ENCODE measurements at regions of chr2 and their contacts with region 1.

Region 1: DNA sequence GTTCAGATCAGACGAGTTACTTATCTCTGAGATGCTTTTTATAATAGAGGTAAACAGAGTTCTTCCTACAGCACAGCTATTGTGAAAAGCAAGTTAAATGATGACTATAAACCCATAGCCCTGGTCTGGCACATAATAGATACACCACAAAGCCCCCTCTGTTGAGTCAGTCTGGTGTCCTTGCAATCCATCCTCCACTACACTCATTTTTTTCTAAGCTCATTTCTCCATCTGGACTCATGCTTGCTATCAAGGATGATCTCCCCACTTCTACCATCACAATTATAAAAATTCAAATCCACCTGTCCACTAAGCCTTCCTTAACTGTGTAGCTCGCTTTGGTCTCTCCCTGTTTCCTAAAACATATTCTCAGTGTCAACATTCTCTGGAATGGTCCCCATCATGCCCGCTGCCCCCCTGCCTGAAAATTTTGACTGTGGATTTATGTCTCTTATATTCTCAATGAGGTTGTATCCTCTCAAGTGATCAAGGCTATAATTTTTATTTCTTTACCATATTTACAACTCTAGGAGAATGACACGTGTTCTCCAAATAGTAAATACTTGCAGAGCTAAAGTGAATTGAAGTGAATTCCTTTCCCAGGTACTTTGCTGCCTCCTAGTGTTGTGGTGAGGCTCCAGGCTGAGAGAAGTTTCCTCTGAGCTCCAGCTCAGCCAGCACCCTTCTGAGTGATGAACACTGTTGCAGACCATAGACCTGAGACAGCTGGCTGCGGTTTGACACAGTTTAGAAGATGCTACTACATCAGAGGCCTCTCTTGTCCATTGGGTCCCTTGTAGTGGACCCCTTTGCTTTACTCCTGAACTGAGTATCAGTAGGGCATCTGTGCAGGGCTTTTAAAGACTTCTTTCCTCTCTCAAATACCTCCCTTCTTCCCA is 108.7 kb downstream of the DPP10 start:
- DNase-seq: peak; percentile 62
- H3K4me3 Mint-ChIP-seq: no peak overlapping the region
- H3K27ac Mint-ChIP-seq: no peak overlapping the region
- H3K4me1 Mint-ChIP-seq: no peaks in the 10 kb centered on the region
- H3K27me3 Mint-ChIP-seq: peaks cover 39% of the 10 kb centered on the region
- CTCF ChIP-seq: peak; percentile 78

Region 2: DNA sequence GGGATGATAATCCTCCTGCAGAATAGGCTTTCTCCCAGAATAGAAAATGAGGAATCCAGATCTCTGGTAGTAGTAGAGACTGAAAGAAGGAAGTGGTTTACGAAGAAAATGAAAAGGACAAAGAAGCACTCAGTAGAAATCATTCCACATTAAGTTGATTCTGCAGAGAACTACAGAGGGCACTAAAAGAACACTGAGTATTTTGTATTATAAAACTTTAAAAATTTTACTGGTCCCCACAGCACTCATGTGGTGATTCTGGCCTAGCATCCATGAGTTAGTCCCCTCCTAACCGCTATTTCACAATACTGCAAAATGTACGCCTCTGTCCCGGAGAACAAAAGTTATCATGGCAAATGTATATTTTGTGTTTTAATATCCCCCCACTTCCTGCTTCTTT is 751.8 kb before region 1 on chr2:
- CTCF ChIA-PET with region 1: interaction called, 3 read pairs
- POLR2A ChIA-PET with region 1: no interaction called
- intact Hi-C with region 1: loop called (anchors 5 kb)
- DNase-seq: no peak
- H3K4me3 Mint-ChIP-seq: no peak overlapping the region
- H3K27ac Mint-ChIP-seq: no peak overlapping the region
- H3K4me1 Mint-ChIP-seq: no peaks in the 10 kb centered on the region
- H3K27me3 Mint-ChIP-seq: no peaks in the 10 kb centered on the region
- CTCF ChIP-seq: no peak

Region 3: DNA sequence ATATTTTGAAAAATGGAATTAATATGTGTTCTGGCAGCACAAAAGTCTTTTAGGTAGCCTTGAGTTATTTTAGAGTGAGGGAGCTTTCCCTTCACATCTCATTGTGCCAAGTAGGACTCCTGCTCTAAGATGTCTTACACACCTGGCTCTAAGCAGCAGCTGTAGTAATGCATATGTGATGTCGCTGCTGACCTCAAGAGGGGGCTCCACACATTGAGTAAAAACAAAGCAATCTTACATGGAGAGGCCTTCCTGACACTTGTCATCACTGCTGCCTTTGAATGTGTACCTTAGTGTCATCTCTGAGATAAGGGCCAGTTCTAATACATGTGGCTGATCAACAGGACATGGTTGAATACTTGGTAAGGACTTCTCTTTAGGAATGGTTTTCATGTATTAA is 585.5 kb before region 1 on chr2:
- CTCF ChIA-PET with region 1: interaction called, 8 read pairs
- POLR2A ChIA-PET with region 1: interaction called, 6 read pairs
- intact Hi-C with region 1: loop called (anchors 5 kb)
- DNase-seq: peak; percentile 44
- H3K4me3 Mint-ChIP-seq: no peak overlapping the region
- H3K27ac Mint-ChIP-seq: no peak overlapping the region
- H3K4me1 Mint-ChIP-seq: peaks cover 6% of the 10 kb centered on the region
- H3K27me3 Mint-ChIP-seq: no peaks in the 10 kb centered on the region
- CTCF ChIP-seq: peak; percentile 34

Region 4: GRCh38 chr2:113977660-113978523 is 573.3 kb before region 1 on chr2:
- CTCF ChIA-PET with region 1: interaction called, 58 read pairs
- POLR2A ChIA-PET with region 1: no interaction called
- intact Hi-C with region 1: loop called (anchors 1 kb)
- DNase-seq: peak; percentile 29
- H3K4me3 Mint-ChIP-seq: no peak overlapping the region
- H3K27ac Mint-ChIP-seq: no peak overlapping the region
- H3K4me1 Mint-ChIP-seq: peaks cover 6% of the 10 kb centered on the region
- H3K27me3 Mint-ChIP-seq: no peaks in the 10 kb centered on the region
- CTCF ChIP-seq: peak; percentile 46

Region 5: DNA sequence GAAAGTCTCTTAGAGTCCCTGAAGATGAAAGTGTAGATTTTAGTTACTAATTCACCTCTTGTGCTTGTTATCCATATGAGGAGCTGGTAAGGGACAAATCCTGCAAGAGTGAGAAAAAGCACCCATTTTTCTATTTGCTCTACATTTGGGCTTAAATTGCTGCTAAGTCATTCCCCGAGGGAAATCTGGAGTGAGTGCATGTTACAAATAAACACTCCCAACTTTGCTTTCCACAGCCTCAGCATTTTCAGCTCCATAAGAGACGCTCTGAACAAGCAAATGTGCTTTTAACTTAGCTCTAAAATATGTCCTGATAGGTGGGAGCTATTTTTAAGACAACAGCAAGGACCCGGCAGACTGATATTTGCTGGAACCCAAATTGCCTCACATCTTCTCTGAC is 18.0 kb after region 1 on chr2:
- CTCF ChIA-PET with region 1: interaction called, 20 read pairs
- POLR2A ChIA-PET with region 1: no interaction called
- intact Hi-C with region 1: no loop called
- DNase-seq: no peak
- H3K4me3 Mint-ChIP-seq: no peak overlapping the region
- H3K27ac Mint-ChIP-seq: no peak overlapping the region
- H3K4me1 Mint-ChIP-seq: no peaks in the 10 kb centered on the region
- H3K27me3 Mint-ChIP-seq: no peaks in the 10 kb centered on the region
- CTCF ChIP-seq: no peak

Region 6: DNA sequence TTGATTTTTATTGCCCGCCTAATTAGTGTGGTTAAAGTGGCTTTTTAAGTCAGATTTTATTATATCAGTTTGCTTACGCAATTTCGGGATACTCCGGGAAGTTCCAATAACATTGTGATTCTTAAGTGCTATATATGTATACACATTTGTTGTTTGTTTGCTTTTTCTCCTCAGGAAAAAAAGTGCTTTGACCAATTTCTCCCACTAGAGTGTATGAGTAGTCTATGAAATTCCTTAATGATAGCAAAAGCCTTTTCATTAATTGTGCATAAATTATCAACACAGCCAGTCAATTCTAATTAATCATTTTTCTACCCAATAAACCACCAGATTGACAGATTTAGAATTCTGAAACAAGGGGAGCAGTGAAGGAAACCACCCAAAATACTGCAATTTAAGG is 63.4 kb after region 1 on chr2:
- CTCF ChIA-PET with region 1: no interaction called
- POLR2A ChIA-PET with region 1: no interaction called
- intact Hi-C with region 1: no loop called
- DNase-seq: no peak
- H3K4me3 Mint-ChIP-seq: no peak overlapping the region
- H3K27ac Mint-ChIP-seq: no peak overlapping the region
- H3K4me1 Mint-ChIP-seq: no peaks in the 10 kb centered on the region
- H3K27me3 Mint-ChIP-seq: peaks cover 40% of the 10 kb centered on the region
- CTCF ChIP-seq: no peak

Measured in MCF 10A (cell line).